Breast epithelium (tissue), 4 donors: ENCODE measurements at regions of chr14 and their contacts with region 1.

Region 1: DNA sequence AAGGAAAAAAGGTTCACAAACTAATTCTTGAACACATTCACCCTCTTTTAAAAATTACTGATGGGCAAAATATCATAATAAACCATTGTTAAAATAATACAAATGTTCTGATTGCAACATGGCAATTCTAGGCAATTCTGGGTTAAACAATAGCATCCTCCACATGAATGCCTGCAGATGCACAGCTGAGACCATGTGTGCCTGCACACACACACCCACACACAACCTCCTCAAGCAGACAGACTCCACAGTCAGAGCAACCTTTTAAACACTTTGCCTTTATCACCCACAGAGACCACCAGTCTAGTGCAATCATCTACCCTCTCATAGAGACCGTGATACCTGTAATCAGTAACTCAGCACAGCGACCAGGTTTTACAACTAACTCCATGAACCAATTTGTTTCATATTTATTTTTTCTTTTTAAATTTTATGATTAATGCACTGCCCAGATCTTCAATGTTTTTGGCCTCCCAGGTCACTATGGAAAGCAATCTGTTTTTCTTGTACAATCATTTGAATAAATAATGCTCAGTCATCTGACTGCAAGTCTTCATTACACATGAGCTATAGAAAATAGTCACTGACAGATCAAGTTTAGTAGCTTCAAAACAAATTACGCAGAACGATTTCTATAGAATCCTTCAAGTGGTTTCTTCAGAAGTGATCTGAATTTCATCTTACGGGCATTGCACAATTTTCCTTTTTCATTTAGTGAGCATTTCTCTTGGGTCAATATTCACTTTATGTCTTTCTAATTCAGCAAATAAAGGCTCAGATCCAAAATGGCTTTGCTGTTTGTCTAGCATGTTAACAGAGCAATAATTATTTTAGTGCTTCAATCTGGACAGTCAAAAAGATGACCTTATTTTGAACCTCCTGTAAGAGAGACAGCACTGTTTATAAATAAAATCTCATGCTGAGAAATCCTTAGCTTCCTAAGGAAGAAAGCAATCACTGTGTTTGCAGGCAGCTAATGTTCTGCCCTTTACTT is 105.7 kb downstream of the PRKD1 start:
- DNase-seq: no peak
- H3K4me3 ChIP-seq: no peak overlapping the region
- H3K27ac ChIP-seq: no peak overlapping the region
- H3K4me1 ChIP-seq: no peaks in the 10 kb centered on the region
- H3K27me3 ChIP-seq: no peaks in the 10 kb centered on the region
- CTCF ChIP-seq: no peak
- POLR2A ChIP-seq: no peak

Region 2: DNA sequence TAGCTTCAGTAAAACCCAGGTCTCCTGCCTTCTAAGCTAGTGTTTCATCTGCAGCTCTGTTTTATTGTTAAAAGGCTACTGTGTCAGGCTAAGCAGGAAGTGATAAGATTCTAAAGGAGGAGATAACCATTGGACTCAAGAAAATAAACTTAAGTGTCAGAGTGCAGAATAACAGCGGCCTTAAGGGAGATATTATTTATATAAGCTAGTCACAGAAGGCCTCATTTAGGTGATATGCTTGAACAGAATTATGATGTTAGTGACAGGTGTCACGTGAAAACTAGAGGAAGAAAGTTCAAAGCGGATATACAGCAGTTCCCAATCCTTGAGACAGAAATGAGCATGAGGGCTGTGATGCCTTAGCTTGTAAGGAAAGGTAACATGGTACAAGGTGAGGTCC is 681.9 kb before region 1 on chr14:
- intact Hi-C with region 1: no loop called
- DNase-seq: no peak
- H3K4me3 ChIP-seq: no peak overlapping the region
- H3K27ac ChIP-seq: no peak overlapping the region
- H3K4me1 ChIP-seq: no peaks in the 10 kb centered on the region
- H3K27me3 ChIP-seq: no peaks in the 10 kb centered on the region
- CTCF ChIP-seq: no peak
- POLR2A ChIP-seq: no peak

Region 3: GRCh38 chr14:29759521-29760340 is 62.2 kb before region 1 on chr14:
- intact Hi-C with region 1: no loop called
- DNase-seq: no peak
- H3K4me3 ChIP-seq: no peak overlapping the region
- H3K27ac ChIP-seq: no peak overlapping the region
- H3K4me1 ChIP-seq: no peaks in the 10 kb centered on the region
- H3K27me3 ChIP-seq: no peaks in the 10 kb centered on the region
- CTCF ChIP-seq: no peak
- POLR2A ChIP-seq: no peak

Region 4: DNA sequence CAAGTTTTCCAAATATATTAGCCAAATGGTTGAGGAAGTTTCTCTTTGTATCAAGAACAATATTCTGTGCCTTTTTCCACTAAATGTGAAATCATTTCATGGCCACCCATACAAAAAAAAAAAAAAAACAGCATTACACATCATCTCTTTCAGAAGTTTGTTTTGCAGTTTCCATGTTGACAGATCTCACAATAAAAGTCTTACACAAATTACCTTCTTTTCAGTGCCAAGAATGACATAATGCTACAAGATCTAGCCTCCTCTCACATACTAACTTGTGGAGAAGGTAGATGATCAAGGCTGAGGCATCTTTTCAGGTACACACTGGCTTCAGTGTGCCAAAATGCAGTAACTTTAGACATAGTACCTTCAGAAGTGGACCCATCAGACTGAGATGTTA is 70.4 kb after region 1 on chr14:
- intact Hi-C with region 1: no loop called
- DNase-seq: no peak
- H3K4me3 ChIP-seq: no peak overlapping the region
- H3K27ac ChIP-seq: no peak overlapping the region
- H3K4me1 ChIP-seq: no peaks in the 10 kb centered on the region
- H3K27me3 ChIP-seq: no peaks in the 10 kb centered on the region
- CTCF ChIP-seq: no peak
- POLR2A ChIP-seq: no peak

Region 5: GRCh38 chr14:29955087-29955486 is 133.1 kb after region 1 on chr14:
- intact Hi-C with region 1: loop called (anchors 2 kb)
- DNase-seq: no peak
- H3K4me3 ChIP-seq: no peak overlapping the region
- H3K27ac ChIP-seq: no peak overlapping the region
- H3K4me1 ChIP-seq: no peaks in the 10 kb centered on the region
- H3K27me3 ChIP-seq: no peaks in the 10 kb centered on the region
- CTCF ChIP-seq: no peak
- POLR2A ChIP-seq: no peak